GM12878 (cell line): ENCODE measurements at regions of chr7 and their contacts with region 1.

Region 1: GRCh38 chr7:35424869-35425495 is 171.1 kb upstream of the TBX20 start:
- DNase-seq: no peak
- ATAC-seq: peak; percentile 91
- H3K4me3 ChIP-seq: no peak overlapping the region
- H3K27ac ChIP-seq: no peak overlapping the region
- H3K4me1 ChIP-seq: no peaks in the 10 kb centered on the region
- H3K27me3 ChIP-seq: no peaks in the 10 kb centered on the region; a peak in 1 of 4 replicates
- CTCF ChIP-seq: peak; percentile 60 to 81 (median 77)
- EP300 ChIP-seq: no peak
- POLR2A ChIP-seq: no peak
- RAD21 ChIP-seq: peak; percentile 66

Region 2: DNA sequence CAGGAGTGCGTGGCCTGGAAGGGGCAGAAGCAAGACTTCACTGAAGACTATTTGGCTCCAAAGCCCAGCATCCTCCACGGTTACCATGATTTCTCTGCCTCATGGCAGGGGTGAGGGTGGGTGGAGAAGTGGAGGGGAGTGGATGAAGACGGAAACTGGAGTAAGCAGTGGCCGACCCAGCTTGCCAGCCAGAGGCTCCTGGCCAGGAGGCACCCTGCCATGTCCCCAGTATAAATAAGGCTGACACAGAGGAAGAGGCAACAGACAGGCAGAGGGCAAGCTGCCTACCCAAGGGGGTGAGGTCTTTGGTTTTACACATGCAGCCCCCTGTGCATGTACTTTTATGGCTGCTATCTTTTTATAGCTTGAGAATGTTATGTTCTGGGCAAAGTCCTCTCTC is 68.5 kb before region 1 on chr7:
- CTCF ChIA-PET with region 1: no interaction called
- POLR2A ChIA-PET with region 1: no interaction called
- RAD21 ChIA-PET with region 1: no interaction called
- SMC1A ChIA-PET with region 1: no interaction called
- in situ Hi-C with region 1: no loop called
- intact Hi-C with region 1: no loop called
- DNase-seq: no peak
- ATAC-seq: no peak
- H3K4me3 ChIP-seq: no peak overlapping the region
- H3K27ac ChIP-seq: no peak overlapping the region
- H3K4me1 ChIP-seq: no peaks in the 10 kb centered on the region
- H3K27me3 ChIP-seq: peaks cover 0 to 3% of the 10 kb centered on the region in 2 experiments; a peak in 2 of 4 replicates
- CTCF ChIP-seq: no peak
- EP300 ChIP-seq: no peak
- POLR2A ChIP-seq: no peak
- RAD21 ChIP-seq: no peak

Region 3: DNA sequence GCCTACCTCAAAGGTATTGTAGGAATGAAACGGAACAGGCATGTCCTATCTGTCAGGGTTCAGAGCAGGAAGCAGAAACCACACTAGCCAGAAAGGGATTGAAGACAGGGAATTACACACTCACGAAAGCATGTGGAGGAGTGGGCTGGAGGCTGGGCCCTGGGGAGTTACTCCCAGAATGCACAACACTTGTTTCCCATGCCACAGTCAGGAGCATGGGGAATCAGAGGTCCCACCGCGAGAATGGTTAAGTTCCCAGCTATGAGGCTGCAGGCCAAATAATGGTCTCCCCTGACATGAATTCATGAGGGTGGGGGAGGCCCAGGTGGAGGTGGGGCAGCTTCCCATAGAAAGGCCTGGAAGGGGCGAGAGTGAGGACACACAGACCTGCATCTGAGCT is 57.3 kb after region 1 on chr7:
- CTCF ChIA-PET with region 1: no interaction called
- POLR2A ChIA-PET with region 1: no interaction called
- RAD21 ChIA-PET with region 1: no interaction called
- SMC1A ChIA-PET with region 1: no interaction called
- in situ Hi-C with region 1: no loop called
- intact Hi-C with region 1: no loop called
- DNase-seq: no peak
- ATAC-seq: no peak
- H3K4me3 ChIP-seq: no peak overlapping the region
- H3K27ac ChIP-seq: no peak overlapping the region
- H3K4me1 ChIP-seq: no peaks in the 10 kb centered on the region
- H3K27me3 ChIP-seq: no peaks in the 10 kb centered on the region; a peak in 1 of 4 replicates
- CTCF ChIP-seq: no peak
- EP300 ChIP-seq: no peak
- POLR2A ChIP-seq: no peak
- RAD21 ChIP-seq: no peak

Region 4: GRCh38 chr7:35519971-35520809 is 95.2 kb after region 1 on chr7:
- CTCF ChIA-PET with region 1: interaction called, 21 read pairs
- POLR2A ChIA-PET with region 1: interaction called, 3 read pairs
- RAD21 ChIA-PET with region 1: interaction called, 13 read pairs
- SMC1A ChIA-PET with region 1: interaction called, 6 read pairs
- in situ Hi-C with region 1: no loop called
- intact Hi-C with region 1: loop called (anchors 1 kb)
- DNase-seq: peak; percentile 4
- ATAC-seq: peak; percentile 93
- H3K4me3 ChIP-seq: no peak overlapping the region
- H3K27ac ChIP-seq: no peak overlapping the region
- H3K4me1 ChIP-seq: no peaks in the 10 kb centered on the region
- H3K27me3 ChIP-seq: peaks cover 0 to 4% of the 10 kb centered on the region in 2 experiments; a peak in 2 of 4 replicates
- CTCF ChIP-seq: peak; percentile 86 to 87 (median 86)
- EP300 ChIP-seq: no peak
- POLR2A ChIP-seq: no peak
- RAD21 ChIP-seq: peak; percentile 81

Region 5: GRCh38 chr7:35537067-35538023 is 112.4 kb after region 1 on chr7:
- CTCF ChIA-PET with region 1: interaction called, 3 read pairs
- POLR2A ChIA-PET with region 1: no interaction called
- RAD21 ChIA-PET with region 1: no interaction called
- SMC1A ChIA-PET with region 1: interaction called, 4 read pairs
- in situ Hi-C with region 1: no loop called
- intact Hi-C with region 1: loop called (anchors 2 kb)
- DNase-seq: no peak
- ATAC-seq: peak; percentile 100
- H3K4me3 ChIP-seq: no peak overlapping the region
- H3K27ac ChIP-seq: no peak overlapping the region
- H3K4me1 ChIP-seq: no peaks in the 10 kb centered on the region
- H3K27me3 ChIP-seq: no peaks in the 10 kb centered on the region
- CTCF ChIP-seq: peak; percentile 94 to 96 (median 95)
- EP300 ChIP-seq: no peak
- POLR2A ChIP-seq: no peak
- RAD21 ChIP-seq: peak; percentile 76